ENCODE measurements at regions of chr1 and their contacts with region 1.

Region 1: DNA sequence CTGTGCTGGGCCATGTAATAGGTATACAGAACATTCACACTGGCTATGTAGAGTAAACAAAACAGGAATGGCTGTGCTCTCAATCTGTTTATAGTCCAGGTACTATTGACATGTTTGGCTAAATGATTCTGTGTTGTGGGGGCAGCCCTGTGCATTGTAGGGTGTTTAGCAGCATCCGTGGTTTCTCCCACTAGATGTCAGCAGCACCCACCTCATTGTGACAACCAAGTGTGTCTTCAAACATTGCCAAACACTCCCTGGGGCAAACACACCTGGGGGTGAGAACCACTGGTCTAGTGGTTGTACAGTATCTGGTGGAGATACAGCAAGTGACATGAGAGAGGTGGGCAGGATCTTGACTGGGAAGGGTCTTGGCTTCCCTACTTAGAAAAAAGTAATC is 80.4 kb upstream of the SPATA6 start:
- DNase-seq: no peak
- H3K4me3 ChIP-seq: no peak overlapping the region
- H3K27ac ChIP-seq: no peak overlapping the region
- H3K4me1 ChIP-seq: no peaks in the 10 kb centered on the region
- H3K27me3 ChIP-seq: no peaks in the 10 kb centered on the region
- CTCF ChIP-seq: no peak
- POLR2A ChIP-seq: no peak

Region 2: GRCh38 chr1:48285525-48285924 is 266.9 kb before region 1 on chr1:
- intact Hi-C with region 1: no loop called
- DNase-seq: no peak
- H3K4me3 ChIP-seq: no peak overlapping the region
- H3K27ac ChIP-seq: no peak overlapping the region
- H3K4me1 ChIP-seq: no peaks in the 10 kb centered on the region
- H3K27me3 ChIP-seq: no peaks in the 10 kb centered on the region
- CTCF ChIP-seq: no peak
- POLR2A ChIP-seq: no peak

Region 3: DNA sequence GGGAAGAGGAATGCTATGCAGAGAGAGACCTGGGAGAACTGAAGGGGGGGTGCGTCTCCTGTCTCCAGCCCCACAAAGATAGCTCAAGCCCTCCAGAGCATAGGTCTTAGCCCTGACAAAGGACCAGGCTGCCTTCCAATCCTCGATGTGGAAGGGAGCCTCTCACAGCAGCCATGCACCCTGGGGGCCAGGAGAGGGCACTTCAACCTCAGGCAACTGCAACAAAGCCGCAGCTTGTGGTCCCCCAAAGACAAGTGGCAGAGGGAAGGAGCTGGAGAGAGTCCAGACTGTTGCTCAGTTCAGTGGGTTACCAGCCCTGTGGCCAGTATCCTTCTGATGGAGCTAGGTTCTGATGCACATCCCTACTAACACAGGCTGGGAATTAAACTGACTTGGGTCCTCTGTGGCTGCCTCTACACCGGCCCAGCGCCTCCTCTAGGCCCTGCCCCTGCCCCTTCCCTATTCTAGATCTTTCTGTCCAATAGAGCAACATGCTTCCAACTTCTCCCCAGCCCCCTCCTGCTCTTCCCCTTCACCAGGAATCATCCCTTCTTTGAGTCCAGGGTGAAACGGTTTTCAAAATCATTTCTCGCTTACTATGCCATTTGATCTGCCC is 20.3 kb after region 1 on chr1:
- intact Hi-C with region 1: loop called (anchors 1 kb)
- DNase-seq: peak in 1 of 2 donors; percentile 72
- H3K4me3 ChIP-seq: no peak overlapping the region
- H3K27ac ChIP-seq: peak overlapping the region in 1 of 2 donors; percentile 68
- H3K4me1 ChIP-seq: no peaks in the 10 kb centered on the region
- H3K27me3 ChIP-seq: no peaks in the 10 kb centered on the region
- CTCF ChIP-seq: peak in 2 of 3 donors; percentile 41 to 56
- POLR2A ChIP-seq: no peak

Region 4: DNA sequence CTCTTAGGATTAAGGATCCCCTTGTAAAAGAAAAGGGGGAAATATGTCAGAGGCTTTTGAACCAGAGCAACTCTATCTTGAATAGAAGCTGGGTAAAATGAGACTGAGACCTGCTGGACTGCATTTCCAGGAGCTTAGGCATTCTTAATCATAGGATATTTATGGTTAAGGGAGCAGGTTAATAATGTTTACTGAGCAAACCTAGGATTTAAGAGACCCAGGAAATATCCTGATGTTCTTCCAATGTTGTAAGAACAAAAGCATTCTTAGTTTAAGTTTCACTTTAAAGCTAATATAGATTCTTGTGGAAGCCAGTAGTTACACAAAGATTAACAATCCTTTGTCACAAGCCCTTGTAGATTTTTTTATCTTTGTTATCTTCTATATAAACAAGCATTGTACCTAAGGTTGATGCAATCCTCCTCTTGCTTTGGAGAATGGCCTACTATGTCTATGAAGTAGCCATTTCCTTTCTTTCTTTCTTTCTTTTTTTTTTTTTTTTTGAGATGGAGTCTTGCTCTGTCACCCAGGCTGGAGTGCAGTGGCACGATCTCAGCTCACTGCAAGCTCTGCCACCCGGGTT is 794.4 kb after region 1 on chr1:
- intact Hi-C with region 1: loop called (anchors 10 kb)
- DNase-seq: no peak
- H3K4me3 ChIP-seq: no peak overlapping the region
- H3K27ac ChIP-seq: no peak overlapping the region
- H3K4me1 ChIP-seq: no peaks in the 10 kb centered on the region
- H3K27me3 ChIP-seq: no peaks in the 10 kb centered on the region
- CTCF ChIP-seq: no peak
- POLR2A ChIP-seq: no peak